ENCODE measurements at regions of chr18 and their contacts with region 1.

Region 1: GRCh38 chr18:30828700-30829099 is 213.8 kb downstream of the DSC3 start:
- DNase-seq: no peak
- H3K4me3 ChIP-seq: no peak overlapping the region
- H3K27ac ChIP-seq: no peak overlapping the region
- H3K4me1 ChIP-seq: no peaks in the 10 kb centered on the region
- H3K27me3 ChIP-seq: no peaks in the 10 kb centered on the region
- CTCF ChIP-seq: no peak
- EP300 ChIP-seq: no peak
- POLR2A ChIP-seq: no peak

Region 2: GRCh38 chr18:30544141-30544540 is 284.6 kb before region 1 on chr18:
- in situ Hi-C with region 1: no loop called
- intact Hi-C with region 1: no loop called
- DNase-seq: no peak
- H3K4me3 ChIP-seq: no peak overlapping the region
- H3K27ac ChIP-seq: no peak overlapping the region
- H3K4me1 ChIP-seq: no peaks in the 10 kb centered on the region
- H3K27me3 ChIP-seq: no peaks in the 10 kb centered on the region
- CTCF ChIP-seq: no peak
- EP300 ChIP-seq: no peak
- POLR2A ChIP-seq: no peak

Region 3: DNA sequence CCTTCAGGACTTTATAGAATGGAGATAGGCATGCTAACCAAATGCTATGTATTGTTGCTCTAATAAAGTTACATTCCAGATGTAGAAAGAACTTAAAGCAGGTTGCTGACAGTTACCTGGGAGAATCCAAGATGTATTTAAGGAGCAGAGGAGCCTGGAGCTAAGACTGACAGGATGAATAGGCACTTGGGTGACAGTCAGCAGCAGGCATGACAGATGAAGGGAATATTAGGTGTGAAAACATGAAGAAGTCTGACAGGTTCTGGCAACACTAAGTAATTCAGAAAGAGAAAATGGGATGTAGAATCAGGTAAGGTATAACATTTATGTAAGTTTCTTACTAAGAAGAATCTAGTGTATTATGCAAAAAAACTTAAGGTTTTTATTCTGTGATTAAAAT is 18.1 kb before region 1 on chr18:
- in situ Hi-C with region 1: no loop called
- intact Hi-C with region 1: no loop called
- DNase-seq: no peak
- H3K4me3 ChIP-seq: no peak overlapping the region
- H3K27ac ChIP-seq: no peak overlapping the region
- H3K4me1 ChIP-seq: no peaks in the 10 kb centered on the region
- H3K27me3 ChIP-seq: no peaks in the 10 kb centered on the region
- CTCF ChIP-seq: no peak
- EP300 ChIP-seq: no peak
- POLR2A ChIP-seq: no peak

Region 4: DNA sequence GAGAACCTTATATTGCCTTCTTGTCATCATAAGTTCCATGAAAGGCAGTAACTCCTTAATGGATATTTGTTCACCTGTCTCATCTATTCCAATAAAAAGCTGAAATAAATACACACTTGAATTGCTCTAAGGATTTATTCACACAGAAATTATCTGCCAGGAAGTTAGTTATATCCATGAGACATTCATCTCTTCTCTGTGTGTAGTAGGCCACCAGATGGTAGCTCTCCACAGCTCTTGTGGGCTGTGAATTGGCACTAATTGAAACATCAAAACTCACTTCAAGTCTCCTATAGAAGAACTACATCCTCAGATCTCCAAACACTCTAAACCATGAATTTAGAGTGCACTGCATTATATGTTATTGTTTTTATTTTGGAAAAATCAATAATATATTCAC is 24.3 kb after region 1 on chr18:
- in situ Hi-C with region 1: no loop called
- intact Hi-C with region 1: loop called (anchors 1 kb)
- DNase-seq: no peak
- H3K4me3 ChIP-seq: no peak overlapping the region
- H3K27ac ChIP-seq: no peak overlapping the region
- H3K4me1 ChIP-seq: no peaks in the 10 kb centered on the region
- H3K27me3 ChIP-seq: no peaks in the 10 kb centered on the region
- CTCF ChIP-seq: no peak
- EP300 ChIP-seq: no peak
- POLR2A ChIP-seq: no peak